H1 (cell line): ENCODE measurements at regions of chr11 and their contacts with region 1.

Region 1: GRCh38 chr11:106322111-106322510 is 244.6 kb downstream of the AASDHPPT start:
- DNase-seq: no peak
- H3K4me3 ChIP-seq: no peak overlapping the region
- H3K27ac ChIP-seq: no peak overlapping the region
- H3K4me1 ChIP-seq: peaks cover 0 to 8% (median 5%) of the 10 kb centered on the region in 4 experiments; a peak in 5 of 7 replicates
- H3K27me3 ChIP-seq: no peaks in the 10 kb centered on the region
- CTCF ChIP-seq: no peak
- EP300 ChIP-seq: no peak
- POLR2A ChIP-seq: no peak
- RAD21 ChIP-seq: no peak

Region 2: GRCh38 chr11:106152013-106152412 is 170.1 kb before region 1 on chr11:
- CTCF ChIA-PET with region 1: no interaction called
- POLR2A ChIA-PET with region 1: no interaction called
- DNase-seq: no peak
- H3K4me3 ChIP-seq: no peak overlapping the region
- H3K27ac ChIP-seq: no peak overlapping the region
- H3K4me1 ChIP-seq: no peaks in the 10 kb centered on the region
- H3K27me3 ChIP-seq: peaks cover 0 to 2% (median 0%) of the 10 kb centered on the region in 4 experiments; a peak in 1 of 7 replicates
- CTCF ChIP-seq: peak in 1 of 3 experiments; percentile 29; a peak in 2 of 4 replicates
- EP300 ChIP-seq: no peak
- POLR2A ChIP-seq: no peak
- RAD21 ChIP-seq: peak in 1 of 2 experiments; percentile 25; a peak in 2 of 4 replicates

Region 3: GRCh38 chr11:106304274-106304673 is 17.8 kb before region 1 on chr11:
- CTCF ChIA-PET with region 1: interaction called, 11 read pairs
- POLR2A ChIA-PET with region 1: no interaction called
- DNase-seq: no peak
- H3K4me3 ChIP-seq: no peak overlapping the region
- H3K27ac ChIP-seq: no peak overlapping the region
- H3K4me1 ChIP-seq: no peaks in the 10 kb centered on the region
- H3K27me3 ChIP-seq: no peaks in the 10 kb centered on the region
- CTCF ChIP-seq: no peak
- EP300 ChIP-seq: no peak
- POLR2A ChIP-seq: no peak
- RAD21 ChIP-seq: no peak

Region 4: DNA sequence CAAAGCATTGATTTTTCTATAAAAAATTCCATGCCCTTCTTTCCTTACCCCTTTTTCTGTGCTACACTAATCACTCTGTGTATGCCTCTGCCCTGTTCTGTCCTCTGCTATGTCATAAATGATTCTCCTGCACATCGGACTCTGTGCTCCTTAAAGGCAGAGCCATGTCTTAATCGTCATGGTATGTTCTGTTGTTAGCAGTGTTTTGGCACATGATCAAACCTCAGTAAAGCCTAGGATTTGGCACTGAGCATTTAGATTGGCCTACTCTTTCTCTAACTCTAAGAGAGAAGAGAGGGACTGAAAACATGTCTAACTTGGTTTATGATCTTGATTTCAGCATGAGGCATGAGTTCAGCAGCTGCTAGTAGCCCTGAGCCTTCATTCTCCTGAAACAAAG is 22.3 kb after region 1 on chr11:
- CTCF ChIA-PET with region 1: no interaction called
- POLR2A ChIA-PET with region 1: no interaction called
- DNase-seq: no peak
- H3K4me3 ChIP-seq: no peak overlapping the region
- H3K27ac ChIP-seq: no peak overlapping the region
- H3K4me1 ChIP-seq: no peaks in the 10 kb centered on the region
- H3K27me3 ChIP-seq: no peaks in the 10 kb centered on the region
- CTCF ChIP-seq: no peak
- EP300 ChIP-seq: no peak
- POLR2A ChIP-seq: no peak
- RAD21 ChIP-seq: no peak

Region 5: GRCh38 chr11:106381901-106382300 is 59.8 kb after region 1 on chr11:
- CTCF ChIA-PET with region 1: no interaction called
- POLR2A ChIA-PET with region 1: no interaction called
- DNase-seq: peak in 1 of 2 experiments; percentile 17
- H3K4me3 ChIP-seq: no peak overlapping the region
- H3K27ac ChIP-seq: no peak overlapping the region
- H3K4me1 ChIP-seq: peaks cover 0 to 2% (median 0%) of the 10 kb centered on the region in 4 experiments; a peak in 1 of 7 replicates
- H3K27me3 ChIP-seq: no peaks in the 10 kb centered on the region
- CTCF ChIP-seq: no peak
- EP300 ChIP-seq: no peak
- POLR2A ChIP-seq: no peak
- RAD21 ChIP-seq: no peak

Region 6: DNA sequence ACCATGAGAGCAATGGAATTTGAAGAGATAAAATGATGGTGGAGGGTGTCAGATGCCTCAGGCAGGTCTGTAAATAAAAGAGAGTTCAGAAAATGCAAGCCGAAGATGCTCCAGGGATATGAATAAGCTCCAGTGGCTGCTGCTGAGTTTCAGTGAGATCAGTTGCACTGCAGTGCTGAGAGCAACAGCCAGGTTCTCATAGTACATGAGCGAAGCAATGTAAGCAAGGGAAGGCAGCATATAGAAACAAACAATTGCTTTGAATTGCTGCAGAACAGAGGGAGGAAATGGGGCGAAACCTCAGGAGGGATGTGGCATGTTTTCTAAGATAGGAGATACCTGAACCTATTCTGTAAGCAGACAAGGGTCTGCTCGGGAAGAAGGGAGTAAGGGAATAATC is 124.8 kb after region 1 on chr11:
- CTCF ChIA-PET with region 1: no interaction called
- POLR2A ChIA-PET with region 1: no interaction called
- DNase-seq: no peak
- H3K4me3 ChIP-seq: no peak overlapping the region
- H3K27ac ChIP-seq: 0 out of 2 replicates have a peak overlapping the region, but pooled peaks have one; percentile 4
- H3K4me1 ChIP-seq: no peaks in the 10 kb centered on the region; a peak in 2 of 7 replicates
- H3K27me3 ChIP-seq: no peaks in the 10 kb centered on the region
- CTCF ChIP-seq: no peak
- EP300 ChIP-seq: no peak
- POLR2A ChIP-seq: no peak
- RAD21 ChIP-seq: no peak